Activated CD4-positive, alpha-beta T cell treated with anti-CD3 and anti-CD28 coated beads, Interleukin-2, amount 10 ng/mL, durations not matched to agents 7 days and 5 days (primary cell): ENCODE measurements at regions of chr14 and their contacts with region 1.

Region 1: DNA sequence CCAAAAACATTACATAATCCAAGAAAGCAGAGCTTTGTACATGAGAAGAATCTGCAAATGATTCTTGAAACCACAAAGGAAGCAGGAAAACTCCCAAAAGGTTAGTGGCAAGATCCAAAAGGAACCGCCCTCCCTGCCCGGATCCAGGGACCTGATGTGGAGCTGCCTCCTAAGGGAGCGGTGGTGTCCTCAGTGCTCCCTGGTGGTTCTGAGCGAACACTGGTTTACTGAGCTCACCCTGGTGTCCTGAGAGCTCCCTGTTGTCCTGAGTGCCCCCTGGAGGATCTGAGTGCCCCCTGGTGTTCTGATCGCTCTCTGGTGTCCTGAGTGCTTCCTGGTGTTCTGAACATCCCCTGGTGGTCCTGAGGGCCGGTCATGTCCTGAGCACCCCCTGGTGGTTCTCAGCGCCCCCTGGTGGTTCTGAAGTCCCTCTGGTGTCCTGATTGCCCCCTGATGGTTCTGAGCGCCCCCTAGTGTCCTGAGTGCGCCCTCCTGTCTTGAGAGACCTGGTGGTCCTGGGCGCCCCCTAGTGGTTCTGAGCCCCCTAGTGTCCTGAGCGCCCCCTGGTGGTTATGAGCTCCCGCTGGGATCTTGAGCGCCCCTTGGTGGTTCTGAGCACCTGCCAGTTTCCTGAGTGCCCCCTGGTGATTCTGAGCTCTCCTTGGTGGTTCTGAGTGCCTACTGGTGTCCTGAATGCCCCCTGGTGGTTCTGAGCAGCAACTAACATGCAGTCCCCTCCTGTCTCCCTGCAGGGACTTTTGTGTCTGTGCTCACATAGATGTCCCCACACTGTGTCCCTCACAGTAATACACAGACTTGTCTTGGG is 891.1 kb downstream of the TMEM121 start:
- DNase-seq: peak; percentile 88
- H3K4me3 Mint-ChIP-seq: no peak overlapping the region
- H3K27ac Mint-ChIP-seq: no peak overlapping the region
- H3K4me1 Mint-ChIP-seq: peaks cover 7% of the 10 kb centered on the region
- H3K27me3 Mint-ChIP-seq: peaks cover 16% of the 10 kb centered on the region

Region 2: GRCh38 chr14:106347890-106348755 is 69.3 kb before region 1 on chr14:
- CTCF ChIA-PET with region 1: interaction called, 14 read pairs
- POLR2A ChIA-PET with region 1: no interaction called
- DNase-seq: no peak
- H3K4me3 Mint-ChIP-seq: no peak overlapping the region
- H3K27ac Mint-ChIP-seq: no peak overlapping the region
- H3K4me1 Mint-ChIP-seq: no peaks in the 10 kb centered on the region
- H3K27me3 Mint-ChIP-seq: peaks cover 3% of the 10 kb centered on the region

Region 3: GRCh38 chr14:106390401-106390800 is 27.0 kb before region 1 on chr14:
- CTCF ChIA-PET with region 1: interaction called, 66 read pairs
- POLR2A ChIA-PET with region 1: no interaction called
- DNase-seq: no peak
- H3K4me3 Mint-ChIP-seq: no peak overlapping the region
- H3K27ac Mint-ChIP-seq: no peak overlapping the region
- H3K4me1 Mint-ChIP-seq: peaks cover 7% of the 10 kb centered on the region
- H3K27me3 Mint-ChIP-seq: peaks cover 13% of the 10 kb centered on the region

Region 4: GRCh38 chr14:106459971-106460730 is 42.7 kb after region 1 on chr14:
- CTCF ChIA-PET with region 1: interaction called, 32 read pairs
- POLR2A ChIA-PET with region 1: no interaction called
- DNase-seq: peak; percentile 71
- H3K4me3 Mint-ChIP-seq: no peak overlapping the region
- H3K27ac Mint-ChIP-seq: no peak overlapping the region
- H3K4me1 Mint-ChIP-seq: no peaks in the 10 kb centered on the region
- H3K27me3 Mint-ChIP-seq: peaks cover 20% of the 10 kb centered on the region

Region 5: GRCh38 chr14:106511006-106511799 is 93.8 kb after region 1 on chr14:
- CTCF ChIA-PET with region 1: interaction called, 90 read pairs
- POLR2A ChIA-PET with region 1: no interaction called
- DNase-seq: peak; percentile 78
- H3K4me3 Mint-ChIP-seq: peak overlapping the region; percentile 26
- H3K27ac Mint-ChIP-seq: peak overlapping the region; percentile 88
- H3K4me1 Mint-ChIP-seq: peaks cover 68% of the 10 kb centered on the region
- H3K27me3 Mint-ChIP-seq: peaks cover 3% of the 10 kb centered on the region

Region 6: GRCh38 chr14:106670011-106670410 is 252.6 kb after region 1 on chr14:
- CTCF ChIA-PET with region 1: no interaction called
- POLR2A ChIA-PET with region 1: no interaction called
- DNase-seq: no peak
- H3K4me3 Mint-ChIP-seq: no peak overlapping the region
- H3K27ac Mint-ChIP-seq: no peak overlapping the region
- H3K4me1 Mint-ChIP-seq: peaks cover 15% of the 10 kb centered on the region
- H3K27me3 Mint-ChIP-seq: peaks cover 40% of the 10 kb centered on the region

Region 7: DNA sequence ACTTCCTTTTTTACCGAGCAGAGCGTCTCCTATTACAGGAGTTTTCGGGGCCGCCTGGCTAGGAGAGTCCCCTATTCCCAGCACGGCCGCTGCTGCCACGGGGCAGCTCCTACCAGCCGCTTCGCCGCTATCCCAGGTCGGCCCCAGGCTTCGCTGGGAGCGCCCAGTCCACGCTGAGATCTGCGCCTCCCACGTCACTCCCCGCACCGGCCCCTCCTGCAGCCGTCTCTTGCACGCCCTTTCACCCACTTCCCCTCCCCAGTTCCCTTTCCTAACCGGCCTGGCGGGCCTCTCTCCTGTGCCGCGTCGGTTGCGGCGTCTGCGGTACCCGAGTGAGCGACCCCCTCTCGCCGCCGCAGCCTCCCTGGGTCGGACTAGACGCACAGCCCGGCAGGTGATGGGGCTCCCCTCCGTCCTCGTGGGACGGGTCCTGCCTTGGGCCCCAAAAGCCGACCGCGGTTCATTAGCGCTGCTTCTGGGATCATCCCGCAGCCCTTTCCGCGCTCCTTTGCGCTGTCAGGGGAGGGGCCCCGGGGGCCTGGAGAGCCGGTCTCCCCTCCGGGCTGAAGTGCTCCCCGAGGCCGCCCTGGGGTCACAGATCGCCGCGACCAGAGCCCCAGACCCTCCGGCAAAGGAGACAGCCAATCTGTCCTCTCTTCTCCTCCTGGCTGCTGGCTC is 427.3 kb after region 1 on chr14:
- CTCF ChIA-PET with region 1: no interaction called
- POLR2A ChIA-PET with region 1: no interaction called
- DNase-seq: peak; percentile 68
- H3K4me3 Mint-ChIP-seq: peak overlapping the region; percentile 81
- H3K27ac Mint-ChIP-seq: peak overlapping the region; percentile 84
- H3K4me1 Mint-ChIP-seq: peaks cover 36% of the 10 kb centered on the region
- H3K27me3 Mint-ChIP-seq: peaks cover 7% of the 10 kb centered on the region